Naive thymus-derived CD4-positive, alpha-beta T cell (primary cell): ENCODE measurements at regions of chr17 and their contacts with region 1.

Region 1: GRCh38 chr17:80263253-80264204 is 2.9 kb downstream of the RNF213 start:
- DNase-seq: peak; percentile 40 to 89 (median 77)
- ATAC-seq: peak; percentile 46
- H3K4me3 ChIP-seq: peak overlapping the region; percentile 75
- H3K4me3 Mint-ChIP-seq: peak overlapping the region; percentile 77 to 99 (median 96)
- H3K27ac ChIP-seq: peak overlapping the region; percentile 93
- H3K27ac Mint-ChIP-seq: peak overlapping the region; percentile 89 to 98 (median 94)
- H3K4me1 ChIP-seq: peaks cover 47 to 54% of the 10 kb centered on the region in 2 donors
- H3K4me1 Mint-ChIP-seq: peaks cover 33 to 57% (median 46%) of the 10 kb centered on the region in 7 donors
- H3K27me3 ChIP-seq: no peaks in the 10 kb centered on the region
- H3K27me3 Mint-ChIP-seq: peaks cover 0 to 2% (median 0%) of the 10 kb centered on the region in 5 donors

Region 2: DNA sequence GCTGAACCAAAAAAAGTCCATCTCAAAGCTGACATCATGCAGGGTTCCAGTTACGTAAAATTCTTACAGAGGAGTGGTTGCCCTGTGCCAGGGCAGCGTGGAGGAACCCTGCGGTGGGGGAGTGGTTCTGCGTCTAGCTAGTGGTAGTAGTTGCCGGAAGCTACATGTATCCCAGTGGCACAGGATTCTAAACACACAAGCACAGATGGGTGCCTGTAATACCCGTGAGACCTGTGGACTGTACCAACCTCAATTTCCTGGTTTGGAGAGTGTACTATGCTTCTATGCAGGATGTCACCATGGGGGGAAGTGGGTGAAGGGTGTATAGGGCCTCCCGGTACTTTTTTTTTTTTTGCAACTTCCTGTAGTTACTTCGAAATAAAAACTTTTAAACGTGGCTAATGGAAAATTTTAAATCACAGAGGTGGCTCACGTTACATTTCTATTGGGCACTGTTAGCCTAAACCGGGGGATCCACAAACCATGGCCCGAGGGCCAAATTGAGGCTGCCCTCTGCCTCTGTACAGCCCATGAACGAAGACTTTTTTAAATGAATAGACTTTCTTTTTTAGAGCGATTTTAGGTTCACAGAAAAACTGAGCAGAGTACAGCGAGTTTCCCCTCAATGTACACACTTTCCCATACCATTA is 266.4 kb before region 1 on chr17:
- CTCF ChIA-PET with region 1: no interaction called
- POLR2A ChIA-PET with region 1: no interaction called
- intact Hi-C with region 1: loop called in 1 of 2 experiments (anchors 2 kb)
- DNase-seq: peak; percentile 46 to 96 (median 93)
- ATAC-seq: peak; percentile 97
- H3K4me3 ChIP-seq: peak overlapping the region; percentile 50
- H3K4me3 Mint-ChIP-seq: peak overlapping the region; percentile 72 to 88 (median 82)
- H3K27ac ChIP-seq: peak overlapping the region; percentile 85
- H3K27ac Mint-ChIP-seq: peak overlapping the region; percentile 92 to 99 (median 97)
- H3K4me1 ChIP-seq: peaks cover 39 to 45% of the 10 kb centered on the region in 2 donors
- H3K4me1 Mint-ChIP-seq: peaks cover 29 to 63% (median 46%) of the 10 kb centered on the region in 7 donors
- H3K27me3 ChIP-seq: no peaks in the 10 kb centered on the region
- H3K27me3 Mint-ChIP-seq: no peaks in the 10 kb centered on the region

Region 3: DNA sequence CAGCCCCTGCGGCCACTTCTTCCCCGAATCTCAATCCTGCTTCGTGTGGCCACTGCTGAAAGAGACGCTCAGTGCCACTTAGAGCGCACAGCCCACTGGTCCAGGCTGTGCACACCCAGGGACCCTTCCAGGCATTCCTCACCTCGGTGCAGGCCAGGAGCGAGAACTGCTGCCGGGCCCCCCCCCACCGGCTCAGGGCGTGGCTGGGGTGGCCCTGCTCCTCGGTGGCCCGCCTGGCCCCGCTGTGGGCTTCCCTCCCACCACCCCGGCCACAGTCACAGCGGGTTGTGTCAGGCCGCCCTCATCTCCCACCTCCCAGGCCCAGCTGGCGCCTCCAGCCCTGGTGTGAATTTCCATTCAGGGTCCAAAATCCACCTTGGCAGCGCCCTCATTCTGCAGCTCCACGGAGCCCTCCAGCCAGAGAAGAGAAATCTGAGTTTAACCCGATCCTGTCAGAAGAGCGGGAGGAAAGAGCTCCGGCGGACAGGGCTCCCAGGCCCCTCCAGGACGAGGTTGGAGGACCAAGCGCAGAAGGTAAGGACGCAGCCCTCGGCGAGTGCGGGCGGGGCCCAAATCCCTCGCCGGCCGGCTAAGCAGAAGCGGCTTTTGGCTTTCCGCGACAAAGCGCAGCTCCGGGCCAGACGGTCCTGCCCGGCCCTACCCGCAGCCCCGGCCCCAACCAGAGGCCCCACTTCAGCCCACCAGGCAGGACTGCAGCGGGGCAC is 239.9 kb before region 1 on chr17:
- CTCF ChIA-PET with region 1: no interaction called
- POLR2A ChIA-PET with region 1: no interaction called
- intact Hi-C with region 1: no loop called
- DNase-seq: no peak
- ATAC-seq: no peak
- H3K4me3 ChIP-seq: no peak overlapping the region
- H3K4me3 Mint-ChIP-seq: no peak overlapping the region
- H3K27ac ChIP-seq: no peak overlapping the region
- H3K27ac Mint-ChIP-seq: no peak overlapping the region
- H3K4me1 ChIP-seq: no peaks in the 10 kb centered on the region
- H3K4me1 Mint-ChIP-seq: no peaks in the 10 kb centered on the region
- H3K27me3 ChIP-seq: no peaks in the 10 kb centered on the region
- H3K27me3 Mint-ChIP-seq: no peaks in the 10 kb centered on the region

Region 4: DNA sequence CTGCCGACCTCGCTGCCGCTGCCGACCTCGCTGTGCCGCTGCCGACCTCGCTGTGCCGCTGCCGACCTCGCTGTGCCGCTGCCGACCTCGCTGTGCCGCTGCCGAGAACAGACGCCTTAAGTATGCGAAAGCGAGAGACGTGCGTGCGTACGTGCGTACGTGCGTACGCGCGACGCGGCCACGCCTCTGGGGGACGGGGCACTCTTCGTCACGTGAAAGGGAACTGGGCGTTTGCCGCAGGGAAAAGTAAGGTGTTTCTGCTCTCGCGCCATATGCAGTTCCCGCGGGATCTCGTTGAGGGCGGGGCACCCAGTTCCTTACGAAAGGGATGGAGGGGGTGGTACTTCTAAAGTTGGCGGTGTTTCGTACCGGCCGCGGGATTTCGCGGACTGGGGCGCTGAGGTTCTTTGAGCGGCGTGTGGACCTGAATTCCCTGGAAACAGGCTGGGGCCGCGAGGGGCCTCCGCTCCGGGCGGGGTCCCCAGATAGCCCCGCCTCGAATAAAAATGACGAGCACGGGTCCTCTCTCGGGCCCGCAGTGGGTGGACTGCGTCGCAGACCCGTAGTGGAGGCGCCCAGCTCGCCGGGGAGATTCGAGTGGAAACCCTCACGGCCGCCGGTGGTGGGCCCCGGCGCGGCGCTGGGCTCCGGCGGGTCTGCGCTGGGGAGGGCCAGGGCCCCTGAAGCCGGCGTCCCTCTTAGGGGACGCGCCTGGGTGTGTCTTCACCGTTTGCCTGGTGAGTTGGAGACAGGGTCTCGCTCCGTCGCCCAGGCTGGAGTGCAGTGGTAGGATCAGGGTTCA is 116.3 kb before region 1 on chr17 and contains the start of gene EIF4A3:
- CTCF ChIA-PET with region 1: interaction called, 3 read pairs
- POLR2A ChIA-PET with region 1: interaction called, 3 read pairs
- intact Hi-C with region 1: loop called (anchors 1 kb)
- DNase-seq: peak; percentile 84 to 98 (median 96)
- ATAC-seq: peak; percentile 97
- H3K4me3 ChIP-seq: peak within 1 kb of the TSS; percentile 64
- H3K4me3 Mint-ChIP-seq: peak within 1 kb of the TSS; percentile 81 to 100 (median 98)
- H3K27ac ChIP-seq: peak within 1 kb of the TSS; percentile 91
- H3K27ac Mint-ChIP-seq: peak within 1 kb of the TSS; percentile 68 to 100 (median 97)
- H3K4me1 ChIP-seq: peaks cover 19 to 21% of the 10 kb centered on the region in 2 donors
- H3K4me1 Mint-ChIP-seq: peaks cover 15 to 59% (median 44%) of the 10 kb centered on the region in 7 donors
- H3K27me3 ChIP-seq: no peaks in the 10 kb centered on the region
- H3K27me3 Mint-ChIP-seq: no peaks in the 10 kb centered on the region
- total RNA-seq, gene EIF4A3: 48.6 to 128 (median 75.9) TPM

Region 5: DNA sequence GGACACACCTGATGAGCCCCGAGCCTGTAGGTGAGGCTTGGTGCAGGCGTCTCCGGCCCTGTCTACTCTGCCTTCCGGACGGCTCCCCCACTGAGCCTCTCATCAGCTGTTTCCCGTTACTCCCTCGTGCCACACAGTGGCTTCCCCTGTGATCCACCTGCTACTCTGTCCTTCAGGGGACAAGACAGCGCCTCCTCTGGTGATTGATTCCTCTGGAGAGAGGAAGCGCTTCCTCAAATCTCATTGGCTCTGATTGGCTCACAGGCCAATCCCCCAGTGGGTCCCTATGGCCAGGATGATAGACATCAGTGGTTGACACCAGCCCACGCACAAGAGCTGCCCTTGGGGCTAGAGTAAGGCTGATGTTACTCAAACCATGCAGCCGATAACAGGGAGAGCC is 21.1 kb after region 1 on chr17:
- CTCF ChIA-PET with region 1: no interaction called
- POLR2A ChIA-PET with region 1: interaction called, 11 read pairs
- intact Hi-C with region 1: no loop called
- DNase-seq: no peak
- ATAC-seq: no peak
- H3K4me3 ChIP-seq: no peak overlapping the region
- H3K4me3 Mint-ChIP-seq: no peak overlapping the region
- H3K27ac ChIP-seq: no peak overlapping the region
- H3K27ac Mint-ChIP-seq: peak overlapping the region in 5 of 9 donors; percentile 29 to 92 (median 43)
- H3K4me1 ChIP-seq: no peaks in the 10 kb centered on the region
- H3K4me1 Mint-ChIP-seq: peaks cover 4 to 24% (median 17%) of the 10 kb centered on the region in 7 donors
- H3K27me3 ChIP-seq: no peaks in the 10 kb centered on the region
- H3K27me3 Mint-ChIP-seq: no peaks in the 10 kb centered on the region

Region 6: GRCh38 chr17:80452173-80452915 is 188.8 kb after region 1 on chr17:
- CTCF ChIA-PET with region 1: no interaction called
- POLR2A ChIA-PET with region 1: no interaction called
- intact Hi-C with region 1: no loop called
- DNase-seq: no peak
- ATAC-seq: no peak
- H3K4me3 ChIP-seq: no peak overlapping the region
- H3K4me3 Mint-ChIP-seq: peak overlapping the region in 2 of 10 donors; percentile 92 to 95
- H3K27ac ChIP-seq: no peak overlapping the region
- H3K27ac Mint-ChIP-seq: no peak overlapping the region
- H3K4me1 ChIP-seq: peaks cover 11 to 14% of the 10 kb centered on the region in 2 donors
- H3K4me1 Mint-ChIP-seq: peaks cover 0 to 28% (median 15%) of the 10 kb centered on the region in 7 donors
- H3K27me3 ChIP-seq: peaks cover 0 to 3% of the 10 kb centered on the region in 2 donors
- H3K27me3 Mint-ChIP-seq: peaks cover 0 to 11% (median 0%) of the 10 kb centered on the region in 5 donors

Region 7: DNA sequence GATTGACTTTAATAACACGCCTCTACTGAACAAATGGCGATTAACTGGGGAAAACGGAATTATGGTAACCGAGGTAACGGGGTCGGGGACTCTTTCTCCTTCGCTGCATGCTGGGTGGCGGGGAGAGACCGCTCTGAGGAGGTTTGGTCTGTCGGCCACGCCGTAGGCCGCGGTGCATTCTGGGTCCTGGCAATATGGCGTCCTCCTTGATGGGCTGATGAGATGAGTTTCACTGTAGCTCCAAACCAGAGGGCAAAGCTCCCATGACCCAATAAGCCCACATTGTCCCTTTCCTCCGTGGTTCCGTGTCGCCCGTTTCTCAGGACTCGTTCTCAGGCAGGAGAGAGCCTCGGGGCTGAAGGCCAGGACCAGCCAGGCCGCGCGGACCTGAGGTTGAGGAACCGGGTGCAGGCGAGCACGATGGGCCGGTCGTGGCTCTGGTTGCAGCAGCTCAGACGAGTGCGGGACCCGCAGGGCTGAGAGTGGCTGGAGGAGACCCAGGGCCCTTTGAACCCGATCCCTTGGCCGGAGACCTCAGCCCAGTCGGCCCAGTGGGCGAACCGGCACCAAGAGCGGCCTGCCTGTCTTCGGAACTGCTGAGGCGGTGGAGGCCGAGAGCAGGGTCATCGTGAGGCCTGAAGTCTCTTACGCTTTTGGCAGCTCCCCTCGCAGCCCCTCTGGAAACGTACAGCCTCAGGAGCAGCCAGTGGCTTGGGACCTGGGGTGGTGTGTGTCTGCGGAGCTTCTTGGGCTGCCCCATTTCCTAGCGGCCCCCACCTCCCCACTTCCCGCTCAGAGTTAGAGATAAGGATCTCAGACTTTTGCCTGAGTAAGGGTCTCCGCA is 281.3 kb after region 1 on chr17 and contains the start of gene RPTOR:
- CTCF ChIA-PET with region 1: no interaction called
- POLR2A ChIA-PET with region 1: no interaction called
- intact Hi-C with region 1: loop called in 1 of 2 experiments (anchors 1 kb)
- DNase-seq: peak; percentile 71 to 91 (median 86)
- ATAC-seq: peak; percentile 100
- H3K4me3 ChIP-seq: peak within 1 kb of the TSS; percentile 97
- H3K4me3 Mint-ChIP-seq: peak within 1 kb of the TSS; percentile 88 to 97 (median 94)
- H3K27ac ChIP-seq: peak within 1 kb of the TSS; percentile 79
- H3K27ac Mint-ChIP-seq: peak within 1 kb of the TSS; percentile 85 to 97 (median 93)
- H3K4me1 ChIP-seq: peaks cover 13 to 15% of the 10 kb centered on the region in 2 donors
- H3K4me1 Mint-ChIP-seq: peaks cover 17 to 39% (median 32%) of the 10 kb centered on the region in 7 donors
- H3K27me3 ChIP-seq: no peaks in the 10 kb centered on the region
- H3K27me3 Mint-ChIP-seq: peaks cover 0 to 4% (median 3%) of the 10 kb centered on the region in 5 donors
- total RNA-seq, gene RPTOR: 53.7 to 89.8 (median 69.5) TPM